Left cardiac atrium (tissue), 4 donors: ENCODE measurements at regions of chr18 and their contacts with region 1.

Region 1: GRCh38 chr18:57561728-57562423 is 24.6 kb downstream of the FECH start:
- DNase-seq: no peak
- ATAC-seq: peak; percentile 31 to 50

Region 2: GRCh38 chr18:56709463-56709862 is 852.4 kb before region 1 on chr18:
- intact Hi-C with region 1: loop called in 1 of 2 experiments (anchors 10 kb)
- DNase-seq: no peak
- ATAC-seq: peak in 1 of 2 donors; percentile 62

Region 3: DNA sequence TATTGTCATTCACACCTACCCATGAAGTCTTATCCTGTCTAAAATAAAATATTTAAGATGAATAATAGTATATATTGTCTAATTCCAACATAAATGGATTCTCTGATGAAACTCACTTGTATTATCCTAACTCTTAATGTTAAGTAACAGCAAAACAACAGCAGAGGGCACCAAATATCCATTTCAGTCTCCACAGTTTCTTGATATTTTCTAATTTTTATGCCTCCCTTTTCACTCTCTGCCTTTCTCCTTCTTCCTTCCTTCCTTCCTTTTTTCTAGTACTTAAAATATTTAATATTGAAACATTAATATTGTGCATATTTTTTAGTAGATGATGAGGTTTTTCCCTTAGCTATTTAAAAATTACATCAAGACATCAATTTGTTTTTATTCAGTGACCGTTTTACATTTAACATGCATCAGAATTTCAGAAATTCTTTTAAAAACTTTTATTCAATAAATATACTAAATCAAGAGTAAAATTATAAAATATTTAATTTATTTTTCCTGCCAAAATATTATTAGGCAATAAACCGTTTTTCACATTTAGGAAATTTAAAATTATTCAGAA is 813.1 kb before region 1 on chr18:
- intact Hi-C with region 1: loop called (anchors 5 to 10 kb)
- DNase-seq: no peak
- ATAC-seq: no peak